AG04450 (cell line): ENCODE measurements at regions of chr16 and their contacts with region 1.

Region 1: GRCh38 chr16:86563489-86564345 is 2.9 kb upstream of the FOXC2 start:
- DNase-seq: peak; percentile 80
- H3K4me3 ChIP-seq: peak overlapping the region; percentile 50
- H3K27ac ChIP-seq: peak overlapping the region; percentile 47
- H3K27me3 ChIP-seq: peaks cover 2% of the 10 kb centered on the region
- CTCF ChIP-seq: peak; percentile 100

Region 2: DNA sequence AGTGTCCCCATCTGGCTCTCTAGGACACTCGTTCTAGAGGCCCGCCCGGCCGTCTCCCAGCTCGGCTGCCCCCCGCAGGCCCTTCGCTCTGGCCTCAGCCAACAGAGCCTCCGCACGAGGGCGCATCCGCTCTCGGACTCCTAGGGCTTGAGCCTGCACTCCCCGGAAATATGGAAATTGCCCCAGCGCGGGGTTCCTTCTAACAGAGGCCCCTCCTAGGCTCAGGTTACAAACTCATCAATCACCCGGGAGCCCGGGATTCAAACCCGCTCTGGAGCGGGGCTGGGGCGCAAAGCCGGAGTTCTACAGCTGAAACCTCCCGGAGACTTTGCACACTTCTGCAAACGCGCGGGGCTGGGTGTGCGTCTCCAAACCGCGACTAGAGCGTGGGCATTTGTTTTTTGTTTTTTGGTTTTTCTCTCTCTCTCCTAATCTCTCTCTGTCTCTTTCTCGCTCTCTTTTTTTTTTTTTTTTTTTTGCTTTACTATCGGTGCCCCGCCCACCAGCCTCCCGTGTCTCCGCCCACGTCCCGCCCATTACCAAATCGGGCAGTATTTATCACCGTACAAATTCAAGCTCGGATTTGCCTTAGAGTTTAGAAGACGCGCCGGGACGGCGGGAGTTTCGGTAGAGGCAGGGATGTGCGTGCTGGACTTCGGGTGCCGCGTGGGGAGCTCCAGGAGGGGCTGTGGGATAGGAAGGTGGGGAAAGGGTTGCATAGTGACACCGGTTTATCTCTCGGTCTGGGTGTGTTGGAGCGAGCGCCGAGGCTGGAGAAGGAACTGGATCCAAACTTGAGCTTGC is 12.2 kb after region 1 on chr16:
- CTCF ChIA-PET with region 1: interaction called, 5 read pairs
- POLR2A ChIA-PET with region 1: interaction called, 10 read pairs
- DNase-seq: peak; percentile 95
- H3K4me3 ChIP-seq: peak overlapping the region; percentile 76
- H3K27ac ChIP-seq: peak overlapping the region; percentile 100
- H3K27me3 ChIP-seq: no peaks in the 10 kb centered on the region
- CTCF ChIP-seq: peak; percentile 86

Region 3: GRCh38 chr16:87017365-87018012 is 453.8 kb after region 1 on chr16:
- CTCF ChIA-PET with region 1: interaction called, 13 read pairs
- POLR2A ChIA-PET with region 1: no interaction called
- DNase-seq: peak; percentile 46
- H3K4me3 ChIP-seq: no peak overlapping the region
- H3K27ac ChIP-seq: no peak overlapping the region
- H3K27me3 ChIP-seq: no peaks in the 10 kb centered on the region
- CTCF ChIP-seq: peak; percentile 50

Region 4: DNA sequence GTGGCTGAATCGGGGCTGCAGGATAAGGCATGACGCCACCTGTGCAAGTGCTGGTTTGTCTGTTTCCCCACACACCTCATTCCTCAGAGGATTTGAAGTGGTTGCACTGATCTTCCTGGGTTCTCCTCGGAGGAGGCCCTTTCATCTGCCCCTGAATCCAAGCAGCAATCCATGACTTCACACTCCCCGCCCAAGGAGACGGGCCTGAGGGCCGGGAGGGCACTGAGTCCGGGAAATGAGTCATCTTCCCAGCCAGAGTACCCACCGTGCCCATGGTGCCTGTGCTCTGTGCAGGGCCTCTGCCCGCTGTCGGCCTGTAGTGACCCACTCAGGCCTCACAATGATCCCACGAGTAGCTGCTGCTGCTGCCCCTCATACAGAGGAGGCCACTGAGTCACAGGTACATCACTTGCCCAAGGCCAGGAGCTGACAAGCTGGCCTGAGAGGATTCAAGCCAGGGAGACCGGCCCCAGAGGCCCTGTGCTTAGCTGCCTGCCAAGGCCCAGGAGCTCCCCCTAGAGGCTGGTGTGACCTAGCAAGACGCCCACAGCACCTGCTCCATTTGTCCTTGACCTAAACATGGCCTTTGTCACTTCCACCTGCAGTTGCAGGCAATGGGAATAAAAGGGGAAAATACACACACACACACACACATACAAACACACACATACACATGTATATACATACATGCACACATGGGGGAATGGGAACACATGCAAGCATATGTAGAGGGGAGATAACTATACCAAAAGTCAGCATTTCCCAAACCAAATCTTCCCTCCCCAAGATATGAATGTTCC is 513.4 kb after region 1 on chr16:
- CTCF ChIA-PET with region 1: interaction called, 32 read pairs
- POLR2A ChIA-PET with region 1: no interaction called
- DNase-seq: peak; percentile 18
- H3K4me3 ChIP-seq: no peak overlapping the region
- H3K27ac ChIP-seq: no peak overlapping the region
- H3K27me3 ChIP-seq: peaks cover 4% of the 10 kb centered on the region
- CTCF ChIP-seq: peak; percentile 69

Region 5: GRCh38 chr16:87278191-87279095 is 714.7 kb after region 1 on chr16:
- CTCF ChIA-PET with region 1: interaction called, 52 read pairs
- POLR2A ChIA-PET with region 1: no interaction called
- DNase-seq: peak; percentile 68
- H3K4me3 ChIP-seq: no peak overlapping the region
- H3K27ac ChIP-seq: no peak overlapping the region
- H3K27me3 ChIP-seq: no peaks in the 10 kb centered on the region
- CTCF ChIP-seq: peak; percentile 96

Region 6: DNA sequence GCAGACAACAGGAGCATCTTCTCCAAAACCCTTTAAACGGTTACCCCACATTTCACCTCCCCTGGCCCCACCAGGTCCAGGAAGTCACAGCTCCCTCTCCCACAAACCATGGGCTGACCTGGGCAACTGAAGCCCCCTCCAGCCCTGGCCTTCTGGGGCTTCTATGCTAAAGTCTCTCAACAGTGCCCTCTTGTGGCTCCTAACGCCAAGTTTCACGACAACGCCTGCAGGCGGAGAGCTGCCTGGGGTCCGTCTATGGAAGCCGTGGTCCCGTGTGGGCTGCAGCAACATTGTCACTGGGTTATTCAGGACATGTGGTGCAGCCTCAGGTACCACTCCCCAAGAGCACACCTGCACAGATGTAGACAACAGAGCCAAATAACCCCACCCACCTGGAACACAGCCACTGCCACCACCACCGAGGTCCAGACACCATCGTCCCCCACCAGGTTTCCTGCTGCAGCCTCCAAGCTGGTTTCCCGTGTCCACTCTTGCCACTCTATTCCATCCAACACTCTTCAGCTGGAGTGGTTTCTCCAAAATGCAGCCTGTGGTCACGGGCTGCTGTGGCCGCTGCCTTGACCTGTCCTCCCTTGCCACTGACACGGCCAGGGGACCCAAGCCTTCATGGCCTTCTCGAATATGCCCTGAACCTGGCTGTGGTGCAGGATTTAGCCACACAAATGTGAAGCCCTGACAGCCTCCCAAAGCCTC is 734.4 kb after region 1 on chr16:
- CTCF ChIA-PET with region 1: interaction called, 26 read pairs
- POLR2A ChIA-PET with region 1: no interaction called
- DNase-seq: no peak
- H3K4me3 ChIP-seq: no peak overlapping the region
- H3K27ac ChIP-seq: no peak overlapping the region
- H3K27me3 ChIP-seq: no peaks in the 10 kb centered on the region
- CTCF ChIP-seq: peak; percentile 64